ENCODE measurements at regions of chr16 and their contacts with region 1.

Region 1: DNA sequence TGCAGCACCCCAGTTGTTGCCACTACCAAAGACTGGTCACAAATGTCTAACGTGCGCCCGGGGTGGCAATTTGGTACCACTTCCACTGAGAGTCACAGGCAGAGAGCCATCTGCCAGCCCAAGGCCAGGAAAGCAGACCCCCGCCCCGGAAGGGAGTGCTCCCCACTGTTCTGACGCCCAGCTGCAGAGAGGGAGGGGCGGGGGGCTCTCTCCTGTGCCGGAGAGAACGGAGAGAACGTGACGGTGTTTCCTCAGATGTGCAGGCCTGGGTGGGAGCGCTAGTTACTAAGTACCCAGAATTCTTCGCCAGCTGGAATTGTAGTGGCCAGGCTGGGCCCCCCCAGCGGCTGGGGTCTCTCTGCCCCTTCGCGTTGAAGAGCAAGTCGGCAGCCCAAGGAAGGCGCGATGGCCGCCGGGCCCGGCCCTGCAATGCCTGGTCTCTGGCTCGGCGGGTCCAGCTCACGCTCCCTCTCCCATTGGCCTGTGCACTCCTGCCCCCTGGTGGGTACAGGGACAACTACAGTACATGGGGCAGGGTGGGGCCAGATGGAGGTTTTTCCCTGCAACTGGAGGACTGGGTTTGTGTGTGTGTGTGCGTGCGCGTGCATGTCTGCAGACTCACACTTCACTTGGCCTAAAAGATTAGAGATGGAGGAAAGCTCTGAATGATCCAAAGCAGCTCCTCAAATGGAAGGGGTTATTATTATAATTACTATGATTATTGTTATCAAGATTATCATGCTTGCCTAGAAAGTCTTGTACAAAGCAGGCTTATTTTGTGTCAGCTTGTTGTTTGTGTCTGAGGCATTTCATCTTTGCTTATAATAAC is 107.1 kb downstream of the AMFR start:
- DNase-seq: peak; percentile 69 to 82 (median 75)
- H3K4me3 ChIP-seq: peak overlapping the region in 5 of 7 experiments; percentile 8 to 57 (median 53)
- H3K27ac ChIP-seq: no peak overlapping the region
- H3K4me1 ChIP-seq: peaks cover 0 to 13% (median 12%) of the 10 kb centered on the region in 4 experiments
- H3K27me3 ChIP-seq: peaks cover 0 to 5% (median 0%) of the 10 kb centered on the region in 5 experiments

Region 2: GRCh38 chr16:55944377-55944802 is 373.8 kb before region 1 on chr16:
- CTCF ChIA-PET with region 1: interaction called, 57 read pairs
- POLR2A ChIA-PET with region 1: no interaction called
- DNase-seq: peak; percentile 22 to 53 (median 38)
- H3K4me3 ChIP-seq: no peak overlapping the region
- H3K27ac ChIP-seq: no peak overlapping the region
- H3K4me1 ChIP-seq: peaks cover 0 to 15% (median 0%) of the 10 kb centered on the region in 4 experiments
- H3K27me3 ChIP-seq: peaks cover 0 to 16% (median 4%) of the 10 kb centered on the region in 5 experiments

Region 3: GRCh38 chr16:56203052-56203451 is 115.2 kb before region 1 on chr16:
- CTCF ChIA-PET with region 1: interaction called, 15 read pairs
- POLR2A ChIA-PET with region 1: no interaction called
- DNase-seq: peak; percentile 44 to 64 (median 56)
- H3K4me3 ChIP-seq: no peak overlapping the region
- H3K27ac ChIP-seq: no peak overlapping the region
- H3K4me1 ChIP-seq: peaks cover 0 to 18% (median 5%) of the 10 kb centered on the region in 4 experiments
- H3K27me3 ChIP-seq: no peaks in the 10 kb centered on the region

Region 4: GRCh38 chr16:56281256-56281805 is 36.9 kb before region 1 on chr16:
- CTCF ChIA-PET with region 1: interaction called, 19 read pairs
- POLR2A ChIA-PET with region 1: no interaction called
- DNase-seq: no peak
- H3K4me3 ChIP-seq: no peak overlapping the region
- H3K27ac ChIP-seq: no peak overlapping the region
- H3K4me1 ChIP-seq: peaks cover 0 to 46% (median 31%) of the 10 kb centered on the region in 4 experiments
- H3K27me3 ChIP-seq: no peaks in the 10 kb centered on the region

Region 5: GRCh38 chr16:56332464-56333079 is 14.4 kb after region 1 on chr16:
- CTCF ChIA-PET with region 1: interaction called, 17 read pairs
- POLR2A ChIA-PET with region 1: no interaction called
- DNase-seq: no peak
- H3K4me3 ChIP-seq: no peak overlapping the region
- H3K27ac ChIP-seq: no peak overlapping the region
- H3K4me1 ChIP-seq: peaks cover 0 to 5% (median 0%) of the 10 kb centered on the region in 4 experiments
- H3K27me3 ChIP-seq: peaks cover 0 to 2% (median 0%) of the 10 kb centered on the region in 5 experiments

Region 6: DNA sequence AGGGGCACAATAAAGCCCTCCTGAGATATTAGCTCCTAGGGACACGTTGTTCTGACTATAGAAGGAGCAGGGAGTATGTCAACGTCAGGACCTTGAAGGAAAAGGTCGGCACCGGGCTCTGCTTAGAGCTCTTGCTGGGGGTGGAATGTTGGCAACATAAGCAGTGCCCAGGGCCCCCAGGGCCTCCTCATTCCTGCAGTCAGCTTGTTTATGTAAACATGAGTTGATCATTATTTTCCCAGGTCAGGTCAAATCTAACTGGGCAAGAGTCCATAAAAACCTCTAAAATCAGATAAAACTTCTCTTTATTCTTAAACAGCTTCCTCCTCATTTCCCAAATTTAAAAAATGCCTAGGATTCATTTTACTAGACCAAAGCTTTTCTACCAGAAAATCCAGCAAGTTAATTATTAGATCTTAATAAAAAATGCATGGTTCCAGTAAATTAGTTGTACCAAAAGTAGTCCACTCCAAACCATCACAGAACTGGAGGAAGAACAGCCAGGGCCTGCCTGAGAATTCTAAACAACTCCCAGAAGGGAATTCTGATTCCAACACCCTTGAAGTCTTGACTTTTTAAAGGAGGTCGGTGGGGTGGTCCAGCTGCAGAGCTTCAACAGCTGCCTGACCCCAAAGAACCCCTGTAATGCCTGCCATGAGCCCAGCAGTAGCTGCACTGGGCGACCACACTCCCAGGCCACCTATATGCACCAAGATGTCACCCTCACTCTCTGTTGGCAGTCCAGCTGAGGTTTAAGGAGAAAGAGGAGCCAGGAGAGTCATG is 52.9 kb after region 1 on chr16:
- CTCF ChIA-PET with region 1: no interaction called
- POLR2A ChIA-PET with region 1: no interaction called
- DNase-seq: no peak
- H3K4me3 ChIP-seq: no peak overlapping the region
- H3K27ac ChIP-seq: no peak overlapping the region
- H3K4me1 ChIP-seq: no peaks in the 10 kb centered on the region
- H3K27me3 ChIP-seq: no peaks in the 10 kb centered on the region